ENCODE measurements at regions of chr13 and their contacts with region 1.

Region 1: GRCh38 chr13:29707876-29708543 is 112.5 kb upstream of the SLC7A1 start:
- DNase-seq: peak; percentile 31
- H3K4me3 Mint-ChIP-seq: no peak overlapping the region
- H3K27ac Mint-ChIP-seq: no peak overlapping the region
- H3K4me1 Mint-ChIP-seq: no peaks in the 10 kb centered on the region
- H3K27me3 Mint-ChIP-seq: peaks cover 12% of the 10 kb centered on the region

Region 2: DNA sequence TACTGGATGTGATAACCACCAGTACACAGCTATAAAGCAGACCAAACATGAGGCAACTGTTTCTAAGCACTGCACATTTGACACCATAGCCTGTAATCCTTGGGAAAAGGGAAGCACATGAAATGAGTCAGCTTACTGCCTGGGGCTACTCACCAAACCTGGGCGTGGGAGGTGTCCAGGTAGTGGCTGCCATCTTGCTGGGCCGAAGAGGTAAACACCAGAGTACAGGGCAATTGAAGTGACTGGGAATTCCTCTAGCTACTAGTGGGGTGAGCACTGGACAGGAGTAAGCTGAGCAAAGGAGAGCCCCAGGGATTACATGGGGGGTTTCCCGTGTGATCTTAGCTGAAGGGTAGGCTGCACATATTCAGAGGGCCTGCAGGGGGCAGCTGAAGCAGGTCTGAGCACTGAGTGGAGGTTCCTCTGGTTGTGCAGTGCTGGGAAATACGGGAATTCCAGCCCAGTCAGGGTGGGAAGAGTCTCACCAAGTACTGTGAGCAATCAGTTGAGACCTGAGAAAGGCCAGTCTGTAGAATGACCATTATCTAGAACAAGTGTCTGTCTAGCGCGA is 253.0 kb before region 1 on chr13:
- intact Hi-C with region 1: loop called (anchors 5 kb)
- DNase-seq: no peak
- H3K4me3 Mint-ChIP-seq: no peak overlapping the region
- H3K27ac Mint-ChIP-seq: no peak overlapping the region
- H3K4me1 Mint-ChIP-seq: no peaks in the 10 kb centered on the region
- H3K27me3 Mint-ChIP-seq: peaks cover 14% of the 10 kb centered on the region

Region 3: DNA sequence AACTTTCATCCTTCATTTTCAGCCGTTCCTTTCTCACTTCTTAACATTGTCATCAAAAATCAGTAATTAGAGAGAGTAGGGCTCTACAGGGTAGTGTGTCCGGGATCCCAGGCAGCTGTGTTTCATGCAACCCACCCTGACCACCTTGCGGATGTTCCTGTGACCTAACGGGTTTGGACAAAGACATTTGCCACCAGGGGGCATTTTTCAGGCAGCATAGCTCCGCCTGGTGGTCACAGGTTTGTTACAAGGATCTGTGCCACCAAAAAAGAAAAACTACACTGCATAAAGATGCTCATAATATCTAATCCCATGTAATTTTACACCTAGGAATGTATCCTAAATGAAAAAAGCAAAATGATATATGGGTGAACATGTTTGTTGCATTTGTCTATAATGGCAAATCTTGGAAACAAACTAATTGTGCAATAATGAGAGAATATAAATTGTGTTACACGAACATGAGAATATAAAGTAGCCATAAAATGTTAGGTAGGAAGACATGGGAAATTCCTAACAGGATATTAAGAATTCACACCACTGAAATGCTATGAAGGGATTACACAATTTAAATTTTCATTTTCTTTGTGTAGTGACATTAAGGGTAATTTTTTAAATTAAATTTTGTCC is 235.6 kb before region 1 on chr13:
- intact Hi-C with region 1: loop called (anchors 1 kb)
- DNase-seq: peak; percentile 18
- H3K4me3 Mint-ChIP-seq: no peak overlapping the region
- H3K27ac Mint-ChIP-seq: no peak overlapping the region
- H3K4me1 Mint-ChIP-seq: no peaks in the 10 kb centered on the region
- H3K27me3 Mint-ChIP-seq: peaks cover 8% of the 10 kb centered on the region

Region 4: GRCh38 chr13:29508130-29508875 is 199.7 kb before region 1 on chr13:
- intact Hi-C with region 1: loop called (anchors 1 kb)
- DNase-seq: peak; percentile 59
- H3K4me3 Mint-ChIP-seq: no peak overlapping the region
- H3K27ac Mint-ChIP-seq: no peak overlapping the region
- H3K4me1 Mint-ChIP-seq: no peaks in the 10 kb centered on the region
- H3K27me3 Mint-ChIP-seq: no peaks in the 10 kb centered on the region

Region 5: GRCh38 chr13:29583073-29583785 is 124.8 kb before region 1 on chr13:
- intact Hi-C with region 1: no loop called
- DNase-seq: no peak
- H3K4me3 Mint-ChIP-seq: no peak overlapping the region
- H3K27ac Mint-ChIP-seq: no peak overlapping the region
- H3K4me1 Mint-ChIP-seq: peaks cover 47% of the 10 kb centered on the region
- H3K27me3 Mint-ChIP-seq: no peaks in the 10 kb centered on the region